Dendritic cell treated with granulocyte-macrophage colony-stimulating factor and Interleukin-4, amounts not matched to agents 40 ng/mL and 50 ng/mL, for 4 days (primary cell): ENCODE measurements at regions of chr1 and their contacts with region 1.

Region 1: GRCh38 chr1:28886731-28887418 is 27.5 kb upstream of the EPB41 start:
- H3K4me3 Mint-ChIP-seq: peak overlapping the region; percentile 90
- H3K27ac Mint-ChIP-seq: peak overlapping the region; percentile 87
- H3K4me1 Mint-ChIP-seq: peaks cover 68% of the 10 kb centered on the region
- H3K27me3 Mint-ChIP-seq: peaks cover 4% of the 10 kb centered on the region

Region 2: DNA sequence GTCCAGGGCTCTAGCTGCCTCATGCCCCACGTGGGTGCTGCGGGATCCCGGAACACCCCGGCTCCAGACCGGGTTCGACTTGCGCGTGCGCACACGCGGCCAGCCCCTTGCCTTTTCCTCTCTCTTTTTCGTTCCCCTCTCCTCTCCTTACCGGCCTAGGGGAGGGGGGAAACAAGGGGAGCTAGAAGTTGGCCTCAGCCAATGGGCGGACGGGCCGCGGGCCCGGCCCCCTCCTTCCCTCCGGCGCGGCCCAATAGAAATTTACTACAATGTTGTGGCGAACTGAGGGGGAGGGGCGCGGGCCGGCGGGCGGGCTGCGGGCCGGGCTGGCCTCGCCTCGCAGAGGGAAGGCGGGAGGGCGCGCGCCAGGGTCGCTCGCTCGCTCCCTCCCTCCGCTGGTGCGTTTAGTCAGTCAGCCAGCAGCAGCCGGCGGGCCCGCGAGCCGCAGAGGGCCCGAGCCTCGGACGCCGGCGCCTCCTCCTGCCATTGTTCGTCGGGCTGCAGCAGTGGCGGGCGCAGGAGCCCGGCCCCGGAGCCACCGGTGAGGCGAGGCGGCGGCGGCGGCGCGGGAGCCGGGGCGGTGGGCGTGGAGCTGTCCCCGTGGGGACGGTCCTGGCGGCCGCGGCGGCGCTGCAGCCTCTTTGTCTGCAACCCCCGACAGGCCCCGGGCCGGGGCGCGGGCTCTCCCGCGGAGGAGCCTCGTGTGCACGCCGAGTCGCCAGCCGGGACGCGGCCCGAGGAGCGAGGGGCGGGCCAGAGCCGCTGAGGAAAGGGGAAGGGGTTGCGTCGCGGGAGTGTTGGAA is 27.6 kb after region 1 on chr1 and contains the start of gene EPB41:
- intact Hi-C with region 1: loop called (anchors 1 kb)
- H3K4me3 Mint-ChIP-seq: peak within 1 kb of the TSS; percentile 85
- H3K27ac Mint-ChIP-seq: peak within 1 kb of the TSS; percentile 61
- H3K4me1 Mint-ChIP-seq: peaks cover 22% of the 10 kb centered on the region
- H3K27me3 Mint-ChIP-seq: peaks cover 2% of the 10 kb centered on the region

Region 3: GRCh38 chr1:29033829-29034466 is 147.1 kb after region 1 on chr1:
- intact Hi-C with region 1: loop called (anchors 1 kb)
- H3K4me3 Mint-ChIP-seq: no peak overlapping the region
- H3K27ac Mint-ChIP-seq: no peak overlapping the region
- H3K4me1 Mint-ChIP-seq: no peaks in the 10 kb centered on the region
- H3K27me3 Mint-ChIP-seq: no peaks in the 10 kb centered on the region

Region 4: GRCh38 chr1:29202584-29203340 is 315.9 kb after region 1 on chr1:
- intact Hi-C with region 1: loop called (anchors 1 kb)
- H3K4me3 Mint-ChIP-seq: no peak overlapping the region
- H3K27ac Mint-ChIP-seq: peak overlapping the region; percentile 90
- H3K4me1 Mint-ChIP-seq: peaks cover 24% of the 10 kb centered on the region
- H3K27me3 Mint-ChIP-seq: no peaks in the 10 kb centered on the region